ENCODE measurements at regions of chr1 and their contacts with region 1.

Region 1: DNA sequence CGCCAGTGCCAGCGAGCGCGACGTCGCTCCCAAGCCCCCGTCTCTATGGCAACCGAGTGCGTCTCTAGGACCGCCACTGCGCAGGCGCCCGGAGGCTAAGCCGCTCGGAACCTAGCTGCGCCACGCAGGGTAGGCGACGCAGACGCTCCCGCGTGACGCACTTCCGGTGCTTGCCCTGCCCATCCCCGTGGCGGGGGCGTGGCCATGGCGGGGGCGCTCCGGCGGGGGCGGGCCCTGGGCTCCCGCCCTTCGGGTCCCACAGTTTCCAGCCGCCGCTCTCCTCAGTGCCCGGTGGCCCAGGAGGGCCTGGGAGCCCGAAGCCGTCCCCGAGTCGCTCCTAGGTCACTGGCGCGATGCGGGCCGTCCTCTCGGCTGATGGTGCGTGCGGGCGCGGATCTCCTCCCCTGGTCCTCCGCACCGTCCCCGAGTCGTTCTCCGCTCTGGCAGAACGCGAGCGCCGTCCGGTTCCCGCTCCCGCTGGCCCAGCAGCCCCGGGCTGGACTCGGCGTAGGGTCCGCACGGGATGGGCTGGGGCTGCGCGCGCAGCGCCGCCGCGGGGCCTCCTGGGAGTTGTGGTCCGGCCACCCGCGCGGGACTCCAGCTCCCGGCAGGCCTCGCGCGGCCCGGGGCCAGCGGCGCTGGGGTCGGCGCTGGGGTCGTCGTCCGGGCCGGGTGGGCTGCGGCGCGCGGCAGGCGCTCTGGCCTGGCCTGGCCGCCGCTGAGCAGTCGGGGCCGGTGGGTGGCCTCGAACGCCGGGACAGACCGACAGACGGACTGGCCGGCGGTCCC is at the start of gene MIB2:
- DNase-seq: peak; percentile 96
- ATAC-seq: peak; percentile 88
- H3K4me3 Mint-ChIP-seq: peak within 1 kb of the TSS; percentile 96
- H3K27ac Mint-ChIP-seq: peak within 1 kb of the TSS; percentile 95
- H3K4me1 Mint-ChIP-seq: peaks cover 17% of the 10 kb centered on the region
- H3K27me3 Mint-ChIP-seq: no peaks in the 10 kb centered on the region
- CTCF ChIP-seq: no peak
- total RNA-seq, gene MIB2: 40.1 to 41.3 TPM

Region 2: DNA sequence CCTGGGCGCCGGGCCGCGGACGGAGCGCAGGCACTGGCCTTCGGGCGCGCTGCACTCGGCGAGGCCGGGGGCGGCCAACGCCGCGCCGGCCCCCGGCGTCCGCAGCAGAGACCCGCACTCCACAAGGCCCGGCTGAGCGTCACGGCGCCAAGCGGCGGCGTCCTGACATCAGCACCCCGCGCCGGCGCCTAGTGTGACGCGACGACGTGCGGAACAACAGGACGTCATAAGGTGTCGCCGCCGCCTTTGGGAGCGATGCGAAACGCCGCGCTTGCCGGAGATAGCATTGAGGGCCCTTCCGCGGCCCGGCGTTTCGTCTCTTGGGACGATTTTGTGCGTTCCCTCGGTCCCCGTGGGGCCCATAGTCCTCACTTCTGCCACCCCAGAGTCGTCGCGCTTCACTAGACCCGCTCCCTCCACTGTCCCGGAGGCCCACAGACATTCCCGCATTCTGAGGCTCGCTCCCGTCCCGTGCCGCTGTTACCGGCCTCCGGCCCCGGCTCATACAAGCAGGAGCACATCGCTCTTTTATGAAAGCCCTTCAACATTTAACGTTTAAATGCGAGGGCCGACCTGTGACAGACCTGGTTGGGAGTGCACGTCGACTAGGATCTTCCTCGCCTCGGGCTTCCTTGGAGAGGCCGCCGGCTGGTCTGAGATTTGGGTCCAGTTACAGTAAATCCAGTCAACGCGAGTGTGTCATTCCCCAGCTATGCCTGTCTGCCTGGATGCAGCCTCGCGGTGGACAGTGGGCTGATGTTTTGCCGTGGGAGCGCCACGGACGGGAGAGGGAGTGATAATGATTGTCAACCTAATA is 40.5 kb before region 1 on chr1 and contains the start of gene SSU72:
- CTCF ChIA-PET with region 1: interaction called, 10 read pairs
- POLR2A ChIA-PET with region 1: interaction called, 7 read pairs
- intact Hi-C with region 1: no loop called
- DNase-seq: peak; percentile 96
- ATAC-seq: peak; percentile 87
- H3K4me3 Mint-ChIP-seq: peak within 1 kb of the TSS; percentile 99
- H3K27ac Mint-ChIP-seq: peak within 1 kb of the TSS; percentile 100
- H3K4me1 Mint-ChIP-seq: peaks cover 27% of the 10 kb centered on the region
- H3K27me3 Mint-ChIP-seq: no peaks in the 10 kb centered on the region
- CTCF ChIP-seq: no peak
- total RNA-seq, gene SSU72: 111 to 113 TPM

Region 3: GRCh38 chr1:1602968-1603506 is 12.4 kb before region 1 on chr1:
- CTCF ChIA-PET with region 1: interaction called, 3 read pairs
- POLR2A ChIA-PET with region 1: interaction called, 13 read pairs
- intact Hi-C with region 1: no loop called
- DNase-seq: no peak
- ATAC-seq: no peak
- H3K4me3 Mint-ChIP-seq: no peak overlapping the region
- H3K27ac Mint-ChIP-seq: no peak overlapping the region
- H3K4me1 Mint-ChIP-seq: peaks cover 20% of the 10 kb centered on the region
- H3K27me3 Mint-ChIP-seq: peaks cover 7% of the 10 kb centered on the region
- CTCF ChIP-seq: no peak

Region 4: DNA sequence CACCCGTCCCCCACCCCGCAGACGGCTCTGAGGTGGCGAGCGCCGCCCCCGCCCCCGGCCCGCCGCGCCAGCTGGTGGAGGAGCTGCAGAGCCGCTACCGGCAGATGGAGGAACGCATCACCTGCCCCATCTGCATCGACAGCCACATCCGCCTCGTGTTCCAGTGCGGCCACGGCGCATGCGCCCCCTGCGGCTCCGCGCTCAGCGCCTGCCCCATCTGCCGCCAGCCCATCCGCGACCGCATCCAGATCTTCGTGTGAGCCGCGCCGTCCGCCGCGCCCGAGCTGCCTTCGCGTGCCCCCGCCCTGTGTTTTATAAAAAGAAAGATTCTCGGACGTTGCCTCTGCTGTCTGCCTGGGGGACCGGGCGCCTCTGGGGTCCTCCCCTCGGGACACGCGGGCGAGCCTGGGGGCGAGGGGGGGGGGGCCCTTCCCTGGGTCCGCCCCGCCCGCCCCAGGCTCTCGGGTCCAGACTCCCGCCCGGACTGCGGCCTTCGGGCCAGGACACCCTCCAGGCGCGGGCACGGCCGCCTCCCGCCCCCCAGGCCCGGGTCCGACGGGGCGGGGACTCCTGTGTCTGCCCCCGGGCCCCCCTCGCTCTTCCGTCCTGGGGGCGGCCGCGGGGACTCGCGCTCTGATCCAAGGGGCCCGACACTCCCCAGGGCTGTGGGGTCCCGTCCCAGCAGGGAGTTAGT is 15.0 kb after region 1 on chr1:
- CTCF ChIA-PET with region 1: interaction called, 10 read pairs
- POLR2A ChIA-PET with region 1: interaction called, 46 read pairs
- intact Hi-C with region 1: no loop called
- DNase-seq: peak; percentile 95
- ATAC-seq: peak; percentile 70
- H3K4me3 Mint-ChIP-seq: peak overlapping the region; percentile 79
- H3K27ac Mint-ChIP-seq: peak overlapping the region; percentile 94
- H3K4me1 Mint-ChIP-seq: peaks cover 11% of the 10 kb centered on the region
- H3K27me3 Mint-ChIP-seq: peaks cover 4% of the 10 kb centered on the region
- CTCF ChIP-seq: no peak